ENCODE measurements at regions of chr19 and their contacts with region 1.

Region 1: GRCh38 chr19:37594304-37594981 is at the starts of genes ZNF540 and ZNF571:
- DNase-seq: peak; percentile 81

Region 2: GRCh38 chr19:37466798-37467607 is 127.4 kb before region 1 on chr19 and contains the start of gene ZNF569:
- CTCF ChIA-PET with region 1: no interaction called
- POLR2A ChIA-PET with region 1: interaction called, 10 read pairs
- DNase-seq: peak; percentile 75

Region 3: GRCh38 chr19:37506387-37507166 is 87.9 kb before region 1 on chr19 and contains the start of gene ZNF793:
- CTCF ChIA-PET with region 1: no interaction called
- POLR2A ChIA-PET with region 1: interaction called, 14 read pairs
- DNase-seq: peak; percentile 37

Region 4: GRCh38 chr19:37583340-37583739 is 11.1 kb before region 1 on chr19:
- CTCF ChIA-PET with region 1: no interaction called
- POLR2A ChIA-PET with region 1: no interaction called
- DNase-seq: no peak

Region 5: GRCh38 chr19:37655689-37656371 is 61.4 kb after region 1 on chr19:
- CTCF ChIA-PET with region 1: no interaction called
- POLR2A ChIA-PET with region 1: interaction called, 10 read pairs
- DNase-seq: peak; percentile 79

Region 6: GRCh38 chr19:37779127-37780005 is 184.9 kb after region 1 on chr19 and contains the start of gene ZNF573:
- CTCF ChIA-PET with region 1: no interaction called
- POLR2A ChIA-PET with region 1: interaction called, 15 read pairs
- DNase-seq: peak; percentile 82